ENCODE measurements at regions of chr3 and their contacts with region 1.

Region 1: GRCh38 chr3:158713094-158713499 is 19.2 kb downstream of the RARRES1 start:
- DNase-seq: no peak
- H3K4me3 ChIP-seq: no peak overlapping the region
- H3K27ac ChIP-seq: no peak overlapping the region
- H3K4me1 ChIP-seq: peaks cover 27% of the 10 kb centered on the region
- H3K27me3 ChIP-seq: no peaks in the 10 kb centered on the region
- CTCF ChIP-seq: no peak

Region 2: DNA sequence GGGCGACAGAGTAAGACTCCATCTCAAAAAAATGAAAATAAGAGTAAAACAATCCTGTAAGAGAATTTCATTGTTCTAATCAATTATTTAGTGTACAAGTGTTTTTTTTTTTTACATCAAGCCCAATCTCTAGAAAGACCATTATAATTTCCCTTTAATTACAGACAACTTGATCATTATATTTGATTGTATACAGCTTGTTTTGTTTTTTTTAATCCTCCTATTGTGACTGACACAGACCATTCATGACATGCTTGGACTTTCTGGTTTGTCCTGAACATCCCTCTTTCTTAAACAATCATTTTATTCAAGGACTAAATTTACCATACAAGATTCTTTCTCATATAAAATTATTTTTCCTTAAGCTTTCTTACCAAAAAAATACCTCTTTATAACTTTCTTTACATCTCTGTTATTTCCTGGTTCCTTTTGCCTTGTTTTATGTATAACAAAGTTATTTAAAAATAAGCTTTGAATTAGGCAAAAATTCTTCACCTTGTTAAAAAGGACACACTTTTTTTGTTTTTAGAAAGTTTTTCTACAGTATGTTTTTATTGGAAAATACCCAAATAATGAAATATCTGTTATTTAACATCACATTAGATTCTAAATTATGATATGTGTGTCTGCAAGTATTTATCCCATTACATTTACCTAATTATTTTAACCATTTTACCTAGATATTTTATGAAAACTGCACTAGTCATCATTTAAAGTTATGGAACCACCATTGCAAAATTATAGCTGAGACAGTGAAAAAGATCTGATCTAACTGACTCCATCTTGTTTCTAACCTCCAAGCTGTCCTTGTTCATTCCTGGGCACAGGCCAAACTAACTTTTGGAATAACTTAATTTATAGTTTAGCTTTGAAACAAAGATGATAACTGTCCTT is 94.9 kb before region 1 on chr3:
- dilution Hi-C with region 1: no loop called
- DNase-seq: no peak
- H3K4me3 ChIP-seq: no peak overlapping the region
- H3K27ac ChIP-seq: no peak overlapping the region
- H3K4me1 ChIP-seq: no peaks in the 10 kb centered on the region
- H3K27me3 ChIP-seq: no peaks in the 10 kb centered on the region
- CTCF ChIP-seq: no peak

Region 3: DNA sequence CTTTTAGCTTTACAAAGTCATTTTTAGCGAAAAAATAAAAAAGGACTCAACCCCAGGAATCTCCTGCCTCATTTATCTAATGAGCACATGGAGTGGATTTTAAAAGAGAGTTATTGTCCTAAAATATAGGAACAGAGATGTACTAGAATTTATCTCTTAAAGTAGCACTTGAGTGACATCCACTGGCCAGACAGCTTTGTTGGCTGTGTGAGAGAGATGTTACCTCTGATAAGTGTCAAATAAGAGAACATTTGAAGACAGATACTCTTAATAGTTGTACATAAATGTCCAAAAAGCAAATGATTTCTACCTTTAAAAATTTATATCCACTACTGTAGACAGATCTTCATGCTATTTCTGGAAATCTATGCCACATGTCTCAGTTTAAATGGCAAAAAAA is 76.5 kb after region 1 on chr3:
- dilution Hi-C with region 1: loop called (anchors 10 kb)
- DNase-seq: no peak
- H3K4me3 ChIP-seq: no peak overlapping the region
- H3K27ac ChIP-seq: no peak overlapping the region
- H3K4me1 ChIP-seq: peaks cover 6% of the 10 kb centered on the region
- H3K27me3 ChIP-seq: no peaks in the 10 kb centered on the region
- CTCF ChIP-seq: peak in 1 of 3 experiments; percentile 29

Measured in keratinocyte (primary cell).